Endothelial cell of umbilical vein (primary cell): ENCODE measurements at regions of chr22 and their contacts with region 1.

Region 1: GRCh38 chr22:30005213-30005857 is 74.9 kb upstream of the HORMAD2 start:
- DNase-seq: peak; percentile 77
- H3K4me3 ChIP-seq: no peak overlapping the region
- H3K27ac ChIP-seq: no peak overlapping the region
- H3K4me1 ChIP-seq: peaks cover 4% of the 10 kb centered on the region
- H3K27me3 ChIP-seq: no peaks in the 10 kb centered on the region
- CTCF ChIP-seq: peak; percentile 85 to 98
- POLR2A ChIP-seq: no peak

Region 2: GRCh38 chr22:29587938-29588699 is 417.2 kb before region 1 on chr22:
- CTCF ChIA-PET with region 1: interaction called, 14 read pairs
- POLR2A ChIA-PET with region 1: no interaction called
- dilution Hi-C with region 1: no loop called
- intact Hi-C with region 1: no loop called
- DNase-seq: peak; percentile 42
- H3K4me3 ChIP-seq: no peak overlapping the region
- H3K27ac ChIP-seq: no peak overlapping the region
- H3K4me1 ChIP-seq: no peaks in the 10 kb centered on the region
- H3K27me3 ChIP-seq: no peaks in the 10 kb centered on the region
- CTCF ChIP-seq: no peak
- POLR2A ChIP-seq: no peak

Region 3: DNA sequence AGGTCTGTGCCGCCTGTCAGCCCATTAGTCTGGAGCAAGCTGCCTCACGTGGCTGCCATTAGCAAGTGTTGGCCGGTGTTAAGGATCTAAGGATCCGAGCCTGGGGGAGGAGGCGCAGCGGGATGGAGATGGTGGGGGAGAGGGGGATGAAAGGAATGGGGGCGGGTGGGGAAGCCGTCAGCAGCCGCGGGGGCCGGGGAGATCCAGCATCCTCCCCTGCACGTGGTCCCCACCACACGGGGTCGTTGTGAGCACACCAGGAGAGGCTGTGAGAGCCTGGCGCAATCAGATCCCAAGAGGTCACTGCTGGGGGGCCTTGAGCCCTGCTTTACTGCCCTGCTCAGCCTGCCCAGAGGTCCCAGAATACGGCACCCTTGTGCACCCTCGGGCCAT is 278.2 kb before region 1 on chr22:
- CTCF ChIA-PET with region 1: interaction called, 26 read pairs
- POLR2A ChIA-PET with region 1: no interaction called
- dilution Hi-C with region 1: no loop called
- intact Hi-C with region 1: loop called (anchors 5 kb)
- DNase-seq: peak; percentile 10
- H3K4me3 ChIP-seq: no peak overlapping the region
- H3K27ac ChIP-seq: no peak overlapping the region
- H3K4me1 ChIP-seq: no peaks in the 10 kb centered on the region
- H3K27me3 ChIP-seq: no peaks in the 10 kb centered on the region
- CTCF ChIP-seq: peak in 1 of 2 donors; percentile 69
- POLR2A ChIP-seq: no peak

Region 4: DNA sequence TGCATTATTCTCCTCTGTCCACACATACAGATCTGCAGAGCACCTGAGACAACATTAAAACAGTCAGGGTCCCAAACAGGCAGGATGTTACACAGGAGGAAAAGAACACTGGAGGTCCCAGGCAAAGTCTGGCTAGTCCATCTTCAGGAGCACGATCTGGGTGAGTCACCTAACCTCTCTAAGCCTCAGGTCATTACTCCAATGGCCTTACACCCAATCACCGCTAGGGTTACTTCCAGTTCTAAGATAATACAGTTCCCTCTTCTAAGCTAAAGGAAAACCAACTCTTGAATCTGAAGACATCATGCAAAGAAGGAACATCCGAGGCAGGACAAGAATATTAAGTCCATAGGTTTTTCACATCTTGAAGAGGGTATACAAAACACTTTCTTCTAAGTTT is 191.8 kb before region 1 on chr22:
- CTCF ChIA-PET with region 1: interaction called, 25 read pairs
- POLR2A ChIA-PET with region 1: no interaction called
- dilution Hi-C with region 1: no loop called
- intact Hi-C with region 1: no loop called
- DNase-seq: no peak
- H3K4me3 ChIP-seq: no peak overlapping the region
- H3K27ac ChIP-seq: no peak overlapping the region
- H3K4me1 ChIP-seq: no peaks in the 10 kb centered on the region
- H3K27me3 ChIP-seq: no peaks in the 10 kb centered on the region
- CTCF ChIP-seq: peak in 1 of 2 donors; percentile 7
- POLR2A ChIP-seq: no peak

Region 5: GRCh38 chr22:29883045-29883774 is 122.1 kb before region 1 on chr22 and contains the start of gene MTMR3:
- CTCF ChIA-PET with region 1: interaction called, 41 read pairs
- POLR2A ChIA-PET with region 1: no interaction called
- dilution Hi-C with region 1: no loop called
- intact Hi-C with region 1: no loop called
- DNase-seq: peak; percentile 91
- H3K4me3 ChIP-seq: peak within 1 kb of the TSS; percentile 42 to 81 (median 59)
- H3K27ac ChIP-seq: peak within 1 kb of the TSS; percentile 58
- H3K4me1 ChIP-seq: peaks cover 4% of the 10 kb centered on the region
- H3K27me3 ChIP-seq: no peaks in the 10 kb centered on the region
- CTCF ChIP-seq: peak; percentile 34 to 61
- POLR2A ChIP-seq: no peak
- total RNA-seq, gene MTMR3: 30.1 and 31.5 TPM in 2 replicates

Region 6: GRCh38 chr22:30015846-30016245 is 10.5 kb after region 1 on chr22:
- CTCF ChIA-PET with region 1: interaction called, 39 read pairs
- POLR2A ChIA-PET with region 1: interaction called, 3 read pairs
- dilution Hi-C with region 1: no loop called
- intact Hi-C with region 1: no loop called
- DNase-seq: no peak
- H3K4me3 ChIP-seq: no peak overlapping the region
- H3K27ac ChIP-seq: no peak overlapping the region
- H3K4me1 ChIP-seq: peaks cover 5% of the 10 kb centered on the region
- H3K27me3 ChIP-seq: no peaks in the 10 kb centered on the region
- CTCF ChIP-seq: no peak
- POLR2A ChIP-seq: no peak

Region 7: GRCh38 chr22:30161051-30161469 is 155.7 kb after region 1 on chr22:
- CTCF ChIA-PET with region 1: no interaction called
- POLR2A ChIA-PET with region 1: no interaction called
- dilution Hi-C with region 1: no loop called
- intact Hi-C with region 1: no loop called
- DNase-seq: no peak
- H3K4me3 ChIP-seq: no peak overlapping the region
- H3K27ac ChIP-seq: no peak overlapping the region
- H3K4me1 ChIP-seq: no peaks in the 10 kb centered on the region
- H3K27me3 ChIP-seq: peaks cover 26 to 52% of the 10 kb centered on the region in 2 experiments
- CTCF ChIP-seq: no peak
- POLR2A ChIP-seq: no peak